Heart left ventricle (tissue), 16 donors: ENCODE measurements at regions of chr17 and their contacts with region 1.

Region 1: GRCh38 chr17:9802305-9803096 is 11.1 kb upstream of the DHRS7C start:
- DNase-seq: peak in 1 of 5 donors; percentile 59
- ATAC-seq: peak; percentile 46 to 75 (median 69)
- H3K4me3 ChIP-seq: no peak overlapping the region
- H3K27ac ChIP-seq: peak overlapping the region in 2 of 12 donors; percentile 13 to 25
- H3K4me1 ChIP-seq: peaks cover 0 to 6% (median 0%) of the 10 kb centered on the region in 12 donors
- H3K27me3 ChIP-seq: peaks cover 0 to 58% (median 0%) of the 10 kb centered on the region in 9 donors
- CTCF ChIP-seq: peak in 3 of 12 donors; percentile 10 to 19 (median 13)
- POLR2A ChIP-seq: no peak

Region 2: DNA sequence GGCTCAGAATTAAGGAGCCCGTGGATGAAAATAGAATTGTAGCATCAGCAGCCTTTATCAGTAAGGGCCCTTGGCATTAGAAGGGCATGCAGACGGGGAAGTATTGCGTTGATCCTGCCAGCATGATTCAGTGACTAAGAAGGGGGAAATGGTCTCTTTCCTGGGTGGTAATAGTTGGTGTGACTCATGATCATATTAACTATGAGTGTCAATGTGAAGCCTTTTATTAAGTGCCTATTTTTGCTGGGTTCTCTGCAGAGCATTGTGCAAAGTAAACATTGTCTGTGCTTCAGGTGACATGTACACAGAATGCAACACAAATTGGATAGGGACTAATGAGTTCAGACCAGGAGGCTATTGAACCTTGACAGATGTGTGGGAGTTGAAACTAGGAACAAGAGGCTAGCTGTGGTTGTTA is 78.1 kb after region 1 on chr17:
- intact Hi-C with region 1: loop called in 1 of 10 experiments (anchors 10 kb)
- DNase-seq: no peak
- ATAC-seq: peak in 2 of 4 donors; percentile 83 to 89
- H3K4me3 ChIP-seq: no peak overlapping the region
- H3K27ac ChIP-seq: no peak overlapping the region
- H3K4me1 ChIP-seq: peaks cover 0 to 5% (median 0%) of the 10 kb centered on the region in 12 donors
- H3K27me3 ChIP-seq: peaks cover 0 to 5% (median 0%) of the 10 kb centered on the region in 9 donors
- CTCF ChIP-seq: no peak
- POLR2A ChIP-seq: no peak

Region 3: GRCh38 chr17:9890124-9890523 is 87.6 kb after region 1 on chr17:
- intact Hi-C with region 1: loop called in 2 of 10 experiments (anchors 5 to 10 kb)
- DNase-seq: peak in 1 of 5 donors; percentile 38
- ATAC-seq: peak in 3 of 4 donors; percentile 39 to 52 (median 50)
- H3K4me3 ChIP-seq: no peak overlapping the region
- H3K27ac ChIP-seq: no peak overlapping the region
- H3K4me1 ChIP-seq: no peaks in the 10 kb centered on the region
- H3K27me3 ChIP-seq: peaks cover 0 to 15% (median 0%) of the 10 kb centered on the region in 9 donors
- CTCF ChIP-seq: peak; percentile 31 to 67 (median 49)
- POLR2A ChIP-seq: no peak